MCF 10A (cell line): ENCODE measurements at regions of chr10 and their contacts with region 1.

Region 1: DNA sequence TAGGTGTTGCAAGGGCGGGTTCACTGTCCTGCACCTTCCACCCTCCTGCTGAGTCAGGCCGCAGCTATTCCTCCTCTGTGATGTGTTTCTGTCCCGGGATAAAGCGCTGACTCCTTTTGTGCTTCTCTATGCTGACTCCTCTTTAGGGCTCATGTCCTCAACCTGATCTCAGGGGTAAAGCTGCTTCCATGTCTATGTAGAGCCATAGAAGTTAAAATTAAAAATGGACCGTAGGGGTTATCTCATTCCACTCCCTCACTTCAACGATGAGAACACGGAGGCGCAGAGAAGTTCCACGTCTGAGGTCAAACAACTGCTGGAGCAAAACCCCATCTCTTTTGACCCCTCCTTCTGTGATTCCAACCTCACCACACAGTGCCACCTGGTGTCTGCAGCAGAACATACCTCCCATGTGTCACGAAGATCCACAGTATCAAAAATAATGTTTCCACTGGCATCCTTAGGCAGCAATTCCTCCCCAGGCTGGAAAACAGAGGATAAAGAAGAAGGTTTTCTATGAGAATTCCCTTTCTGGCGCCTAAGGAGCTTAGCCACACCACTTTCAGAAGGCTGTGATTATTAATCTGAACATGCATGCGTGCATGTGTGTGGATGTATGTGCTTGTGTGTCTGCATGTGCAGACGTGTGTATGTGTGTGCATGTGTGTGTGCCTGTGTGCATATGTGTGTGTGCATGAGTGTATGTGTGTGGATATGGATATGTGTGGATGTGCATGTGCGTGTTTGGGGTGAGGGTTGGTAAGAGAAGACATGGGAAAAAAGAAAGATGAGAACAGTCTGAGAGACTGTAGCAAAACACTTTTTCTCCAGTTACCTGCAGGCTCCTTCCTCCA is 81.2 kb upstream of the UCN3 start:
- DNase-seq: peak; percentile 83
- H3K4me3 Mint-ChIP-seq: peak overlapping the region; percentile 20
- H3K27ac Mint-ChIP-seq: peak overlapping the region; percentile 52
- H3K4me1 Mint-ChIP-seq: peaks cover 20% of the 10 kb centered on the region
- H3K27me3 Mint-ChIP-seq: no peaks in the 10 kb centered on the region
- CTCF ChIP-seq: peak; percentile 55

Region 2: DNA sequence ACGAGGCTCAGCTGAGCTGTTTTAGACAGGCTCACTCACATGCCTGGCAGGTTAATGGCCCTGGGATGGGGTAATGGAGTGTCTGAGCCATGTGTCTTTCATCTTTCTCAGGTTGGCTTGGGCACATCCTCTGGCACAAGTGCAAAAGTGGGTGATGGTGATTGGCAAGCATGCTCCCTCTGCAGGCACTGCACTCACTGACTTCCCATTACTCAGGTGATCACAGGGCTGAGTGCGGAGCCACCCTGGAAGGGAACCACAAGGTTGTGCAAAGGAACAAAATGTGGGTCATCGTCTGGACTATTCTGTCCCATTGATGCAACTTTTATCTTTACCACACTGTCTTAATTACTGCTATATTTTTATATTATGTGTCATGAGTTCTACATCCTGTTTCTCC is 701.6 kb before region 1 on chr10:
- CTCF ChIA-PET with region 1: no interaction called
- POLR2A ChIA-PET with region 1: no interaction called
- intact Hi-C with region 1: no loop called
- DNase-seq: peak; percentile 13
- H3K4me3 Mint-ChIP-seq: no peak overlapping the region
- H3K27ac Mint-ChIP-seq: no peak overlapping the region
- H3K4me1 Mint-ChIP-seq: no peaks in the 10 kb centered on the region
- H3K27me3 Mint-ChIP-seq: no peaks in the 10 kb centered on the region
- CTCF ChIP-seq: no peak

Region 3: DNA sequence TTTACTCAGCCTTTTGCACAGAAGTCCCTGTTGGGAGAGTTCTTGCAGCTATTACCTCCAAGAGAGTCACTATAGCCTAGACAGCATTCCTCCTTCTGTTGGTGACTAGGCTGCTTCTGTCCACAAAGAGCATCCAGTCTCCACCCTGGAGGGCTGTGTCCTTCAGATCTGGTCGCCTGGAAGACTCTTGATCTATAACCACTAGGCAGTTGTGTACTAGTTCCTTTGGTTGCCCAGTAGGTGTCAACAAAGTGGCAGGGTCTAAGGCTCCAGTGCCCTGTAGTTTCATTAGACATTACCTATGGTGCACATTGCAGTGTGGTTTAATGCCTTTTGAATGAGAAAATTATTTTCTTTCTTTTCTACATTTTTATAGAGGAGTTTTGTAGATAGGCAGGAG is 268.6 kb before region 1 on chr10:
- CTCF ChIA-PET with region 1: no interaction called
- POLR2A ChIA-PET with region 1: interaction called, 3 read pairs
- intact Hi-C with region 1: loop called (anchors 1 kb)
- DNase-seq: peak; percentile 45
- H3K4me3 Mint-ChIP-seq: no peak overlapping the region
- H3K27ac Mint-ChIP-seq: no peak overlapping the region
- H3K4me1 Mint-ChIP-seq: peaks cover 28% of the 10 kb centered on the region
- H3K27me3 Mint-ChIP-seq: no peaks in the 10 kb centered on the region
- CTCF ChIP-seq: peak; percentile 30

Region 4: DNA sequence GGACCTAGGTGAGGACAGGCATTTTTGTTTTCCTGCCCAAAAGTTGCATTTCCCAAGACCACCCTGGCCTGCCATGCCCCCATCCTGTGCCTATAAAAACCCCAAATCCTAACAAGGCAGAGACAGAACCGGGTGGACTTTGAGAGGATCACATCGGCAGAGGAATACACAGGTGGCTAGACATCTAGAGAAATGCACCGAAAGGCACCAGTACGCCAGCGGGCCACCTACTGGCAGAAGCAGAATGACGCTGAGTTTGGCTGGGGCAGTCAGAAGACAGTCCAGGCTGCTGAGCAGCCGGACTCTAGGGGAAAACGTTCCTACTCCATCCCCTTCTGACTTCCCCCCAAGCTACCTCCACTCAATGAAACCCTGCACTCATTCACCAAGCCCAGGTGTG is 84.1 kb before region 1 on chr10:
- CTCF ChIA-PET with region 1: no interaction called
- POLR2A ChIA-PET with region 1: no interaction called
- intact Hi-C with region 1: no loop called
- DNase-seq: no peak
- H3K4me3 Mint-ChIP-seq: no peak overlapping the region
- H3K27ac Mint-ChIP-seq: no peak overlapping the region
- H3K4me1 Mint-ChIP-seq: no peaks in the 10 kb centered on the region
- H3K27me3 Mint-ChIP-seq: no peaks in the 10 kb centered on the region
- CTCF ChIP-seq: no peak

Region 5: GRCh38 chr10:5252177-5253015 is 31.1 kb before region 1 on chr10:
- CTCF ChIA-PET with region 1: no interaction called
- POLR2A ChIA-PET with region 1: no interaction called
- intact Hi-C with region 1: no loop called
- DNase-seq: peak; percentile 10
- H3K4me3 Mint-ChIP-seq: no peak overlapping the region
- H3K27ac Mint-ChIP-seq: no peak overlapping the region
- H3K4me1 Mint-ChIP-seq: peaks cover 5% of the 10 kb centered on the region
- H3K27me3 Mint-ChIP-seq: no peaks in the 10 kb centered on the region
- CTCF ChIP-seq: no peak

Region 6: GRCh38 chr10:5305374-5305773 is 21.8 kb after region 1 on chr10:
- CTCF ChIA-PET with region 1: interaction called, 10 read pairs
- POLR2A ChIA-PET with region 1: no interaction called
- intact Hi-C with region 1: no loop called
- DNase-seq: no peak
- H3K4me3 Mint-ChIP-seq: no peak overlapping the region
- H3K27ac Mint-ChIP-seq: no peak overlapping the region
- H3K4me1 Mint-ChIP-seq: peaks cover 6% of the 10 kb centered on the region
- H3K27me3 Mint-ChIP-seq: no peaks in the 10 kb centered on the region
- CTCF ChIP-seq: no peak

Region 7: DNA sequence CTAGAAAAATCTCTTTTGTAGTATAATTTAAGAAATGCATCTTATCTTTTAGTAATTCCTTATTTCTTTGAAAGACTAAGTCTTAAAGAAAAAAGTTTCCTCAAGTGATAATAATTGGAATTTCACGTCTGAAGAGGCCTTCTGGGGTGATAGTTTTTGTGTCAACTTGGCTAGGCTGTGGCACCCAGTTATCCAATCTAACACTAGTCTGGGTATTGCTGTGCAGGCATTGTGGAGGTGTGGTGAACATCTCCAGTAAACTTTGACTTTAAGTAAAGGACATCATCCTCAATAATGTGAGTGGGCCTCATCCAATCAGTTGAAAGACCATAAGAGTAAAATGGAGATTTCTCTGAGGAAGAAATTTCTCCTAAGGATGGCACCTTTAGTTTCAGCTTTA is 123.4 kb after region 1 on chr10:
- CTCF ChIA-PET with region 1: no interaction called
- POLR2A ChIA-PET with region 1: no interaction called
- intact Hi-C with region 1: no loop called
- DNase-seq: no peak
- H3K4me3 Mint-ChIP-seq: no peak overlapping the region
- H3K27ac Mint-ChIP-seq: no peak overlapping the region
- H3K4me1 Mint-ChIP-seq: peaks cover 5% of the 10 kb centered on the region
- H3K27me3 Mint-ChIP-seq: no peaks in the 10 kb centered on the region
- CTCF ChIP-seq: no peak

Region 8: DNA sequence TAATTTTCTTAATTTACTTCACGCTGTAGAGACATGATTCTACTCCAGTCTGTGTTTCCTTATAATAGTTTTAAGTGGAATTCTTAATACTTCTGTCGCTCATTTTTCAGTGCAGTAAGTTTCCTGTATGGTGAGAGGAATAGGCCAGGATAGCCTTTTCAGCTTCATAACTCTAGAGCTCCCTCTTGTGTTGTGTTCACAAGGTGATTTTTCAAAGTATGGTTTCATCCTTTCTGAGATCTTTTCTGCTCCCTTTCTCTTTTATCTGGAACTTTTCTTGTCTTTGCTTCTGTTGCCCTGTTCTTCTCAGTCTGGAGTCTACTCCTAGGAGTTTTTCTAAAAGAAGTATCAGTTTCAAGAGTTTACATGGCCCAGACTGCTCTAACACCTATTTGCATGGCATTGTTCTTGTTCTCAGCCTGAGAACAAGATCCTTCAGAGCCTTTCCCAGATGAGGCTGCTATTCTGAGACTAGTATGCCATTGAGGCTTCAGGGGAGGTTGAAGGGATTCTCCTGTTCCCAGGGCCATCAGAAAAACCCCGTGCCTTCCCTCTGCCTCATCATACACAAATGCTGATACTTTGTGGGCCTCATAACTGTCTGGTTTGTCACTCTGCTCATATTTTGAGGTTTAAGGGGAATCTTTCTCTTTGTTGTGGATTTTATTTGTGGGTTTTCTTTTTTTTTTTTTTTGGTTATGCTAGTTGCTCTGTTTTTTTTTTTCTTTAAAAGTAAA is 150.7 kb after region 1 on chr10:
- CTCF ChIA-PET with region 1: interaction called, 3 read pairs
- POLR2A ChIA-PET with region 1: interaction called, 3 read pairs
- intact Hi-C with region 1: loop called (anchors 5 kb)
- DNase-seq: peak; percentile 64
- H3K4me3 Mint-ChIP-seq: peak overlapping the region; percentile 22
- H3K27ac Mint-ChIP-seq: peak overlapping the region; percentile 75
- H3K4me1 Mint-ChIP-seq: peaks cover 25% of the 10 kb centered on the region
- H3K27me3 Mint-ChIP-seq: no peaks in the 10 kb centered on the region
- CTCF ChIP-seq: peak; percentile 80